ENCODE measurements at regions of chr1 and their contacts with region 1.

Region 1: GRCh38 chr1:93078986-93079654 is at the start of gene MTF2:
- DNase-seq: peak; percentile 83 to 95 (median 90)
- ATAC-seq: peak; percentile 83 to 88
- H3K4me3 Mint-ChIP-seq: peak within 1 kb of the TSS; percentile 90 to 100 (median 97)
- H3K27ac Mint-ChIP-seq: peak within 1 kb of the TSS; percentile 88 to 99 (median 99)
- H3K4me1 Mint-ChIP-seq: peaks cover 15 to 60% (median 42%) of the 10 kb centered on the region in 4 donors
- H3K27me3 Mint-ChIP-seq: no peaks in the 10 kb centered on the region
- polyA plus RNA-seq, gene MTF2: 53.0 to 67.7 (median 61.0) TPM

Region 2: DNA sequence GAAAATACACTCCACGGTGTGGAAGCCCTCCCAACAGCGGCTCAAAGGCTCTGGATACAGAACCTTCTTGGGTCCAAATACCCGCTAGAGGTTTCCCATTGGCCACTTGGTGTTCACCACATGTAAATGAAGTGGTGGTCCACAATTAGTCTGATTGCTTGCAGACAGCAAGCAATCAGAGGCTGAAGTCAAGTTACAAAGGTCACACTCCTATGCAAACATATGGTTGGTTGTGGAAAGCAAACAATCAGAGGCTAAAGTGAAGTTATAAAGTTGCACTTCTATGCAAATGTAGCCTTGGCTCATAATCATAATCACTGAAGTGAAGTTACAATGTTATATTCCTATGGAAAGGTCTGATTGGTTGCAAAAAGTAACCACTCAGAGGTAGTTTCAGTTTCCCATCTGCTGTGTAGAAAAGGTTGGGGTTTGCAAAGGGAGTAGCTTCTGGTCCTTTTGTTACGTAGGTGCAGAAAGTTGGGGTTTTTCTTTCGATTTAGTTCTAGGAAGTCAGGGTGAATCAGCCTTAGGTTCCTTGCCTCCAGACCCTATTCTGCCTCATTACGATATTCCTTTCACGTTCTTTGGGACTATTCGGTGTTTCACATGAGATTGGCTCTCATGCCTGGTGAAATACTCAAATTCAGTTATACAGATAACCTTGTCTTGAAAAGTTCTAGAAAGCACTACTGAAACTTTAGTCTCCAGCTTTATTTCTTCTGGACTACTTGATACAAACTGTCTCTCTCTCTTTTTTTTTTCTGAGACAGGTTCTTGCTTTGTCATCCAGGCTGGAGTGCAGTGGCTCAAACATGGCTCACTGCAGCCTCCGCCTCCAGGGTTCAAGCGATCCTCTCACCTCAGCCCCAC is 36.7 kb before region 1 on chr1:
- POLR2A ChIA-PET with region 1: interaction called, 40 read pairs
- DNase-seq: peak in 9 of 10 donors; percentile 10 to 83 (median 57)
- ATAC-seq: peak; percentile 98 to 99
- H3K4me3 Mint-ChIP-seq: peak overlapping the region; percentile 66 to 86 (median 78)
- H3K27ac Mint-ChIP-seq: peak overlapping the region; percentile 63 to 98 (median 94)
- H3K4me1 Mint-ChIP-seq: peaks cover 2 to 13% (median 11%) of the 10 kb centered on the region in 4 donors
- H3K27me3 Mint-ChIP-seq: no peaks in the 10 kb centered on the region

Region 3: GRCh38 chr1:93179886-93180722 is 101.0 kb after region 1 on chr1 and contains the start of gene TMED5:
- POLR2A ChIA-PET with region 1: interaction called, 25 read pairs
- DNase-seq: peak; percentile 89 to 98 (median 94)
- ATAC-seq: peak; percentile 83 to 84
- H3K4me3 Mint-ChIP-seq: peak within 1 kb of the TSS; percentile 88 to 97 (median 94)
- H3K27ac Mint-ChIP-seq: peak within 1 kb of the TSS; percentile 92 to 98 (median 98)
- H3K4me1 Mint-ChIP-seq: peaks cover 14 to 52% (median 37%) of the 10 kb centered on the region in 4 donors
- H3K27me3 Mint-ChIP-seq: no peaks in the 10 kb centered on the region
- polyA plus RNA-seq, gene TMED5: 15.9 to 18.6 (median 18.0) TPM

Region 4: GRCh38 chr1:93215322-93215721 is 136.2 kb after region 1 on chr1:
- POLR2A ChIA-PET with region 1: no interaction called
- DNase-seq: no peak
- ATAC-seq: no peak
- H3K4me3 Mint-ChIP-seq: no peak overlapping the region
- H3K27ac Mint-ChIP-seq: no peak overlapping the region
- H3K4me1 Mint-ChIP-seq: peaks cover 0 to 16% (median 12%) of the 10 kb centered on the region in 4 donors
- H3K27me3 Mint-ChIP-seq: no peaks in the 10 kb centered on the region

Region 5: DNA sequence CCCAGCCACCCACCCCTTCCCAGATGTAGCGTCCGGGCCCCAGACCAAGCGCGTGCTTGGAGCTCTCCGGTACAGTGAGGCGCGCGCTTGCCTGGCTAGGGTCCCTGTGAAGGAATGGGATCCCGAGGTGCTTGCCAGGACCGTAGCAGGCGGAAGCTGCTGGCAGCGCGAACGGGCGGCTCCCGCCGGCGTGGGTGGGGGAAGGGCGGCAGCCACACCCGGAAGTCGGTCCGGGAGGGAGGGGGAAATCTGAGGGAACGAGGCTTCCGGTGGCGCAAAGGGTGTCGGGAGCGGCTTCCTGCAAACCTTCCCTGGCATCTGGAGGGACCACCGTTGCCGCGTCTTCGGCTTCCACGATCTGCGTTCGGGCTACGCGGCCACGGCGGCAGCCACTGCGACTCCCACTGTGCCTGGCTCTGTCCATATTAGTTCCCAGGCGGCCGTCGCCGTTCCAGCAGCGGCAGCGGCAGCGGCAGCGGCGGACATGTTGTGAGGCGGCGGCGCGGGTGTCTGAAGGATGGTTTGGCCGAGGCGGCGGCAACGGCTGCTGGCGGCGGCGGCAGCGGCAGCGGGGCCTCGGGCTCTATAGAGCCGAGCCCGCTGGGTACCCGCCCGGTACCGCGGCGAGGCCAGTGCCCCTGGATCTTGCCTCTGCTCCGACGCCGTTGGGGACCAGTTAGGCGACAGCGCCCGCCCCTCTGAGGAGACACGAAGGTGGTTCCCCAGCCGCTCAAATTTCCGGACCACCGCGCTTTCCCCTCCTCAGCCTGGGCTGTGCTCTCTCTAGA is 266.7 kb after region 1 on chr1 and contains the start of gene DR1:
- POLR2A ChIA-PET with region 1: interaction called, 17 read pairs
- DNase-seq: peak; percentile 82 to 95 (median 89)
- ATAC-seq: peak; percentile 78 to 83
- H3K4me3 Mint-ChIP-seq: peak within 1 kb of the TSS; percentile 92 to 100 (median 98)
- H3K27ac Mint-ChIP-seq: peak within 1 kb of the TSS; percentile 97 to 99 (median 98)
- H3K4me1 Mint-ChIP-seq: peaks cover 22 to 57% (median 41%) of the 10 kb centered on the region in 4 donors
- H3K27me3 Mint-ChIP-seq: peaks cover 0 to 2% (median 0%) of the 10 kb centered on the region in 5 donors
- polyA plus RNA-seq, gene DR1: 54.3 to 68.3 (median 66.0) TPM